Mammary epithelial cell (primary cell): ENCODE measurements at regions of chr11 and their contacts with region 1.

Region 1: DNA sequence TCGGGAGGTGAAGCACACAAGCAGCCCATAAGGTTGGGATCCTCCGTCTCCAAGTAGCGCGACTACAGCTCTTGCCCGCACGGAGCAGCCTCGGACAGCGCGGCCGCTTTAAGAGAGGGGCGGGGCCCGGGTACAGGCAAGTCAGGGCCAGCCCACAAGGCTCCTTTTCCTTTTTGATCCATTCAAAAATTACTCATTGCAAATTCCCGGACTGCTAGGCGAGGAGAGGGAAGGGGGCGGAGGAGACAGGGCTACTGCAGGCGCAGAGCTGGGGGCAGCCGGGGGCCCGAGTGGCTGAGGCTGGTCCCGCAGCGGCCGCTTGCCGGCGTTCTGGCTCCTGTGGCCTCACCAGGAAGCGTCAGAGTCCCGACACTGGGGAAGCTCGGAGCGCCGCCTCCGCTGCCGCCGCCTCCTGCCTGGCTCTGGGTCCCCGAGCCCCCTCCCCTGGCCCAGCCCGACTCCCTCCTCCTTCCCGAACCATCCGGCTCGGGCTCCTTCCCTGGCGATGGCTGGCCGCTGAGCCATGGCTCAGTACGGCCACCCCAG is at the start of gene UBASH3B:
- DNase-seq: peak; percentile 88
- H3K4me3 ChIP-seq: peak within 1 kb of the TSS; percentile 82 to 96 (median 89)
- H3K27ac ChIP-seq: peak within 1 kb of the TSS; percentile 84
- H3K4me1 ChIP-seq: peaks cover 34% of the 10 kb centered on the region
- H3K27me3 ChIP-seq: no peaks in the 10 kb centered on the region
- CTCF ChIP-seq: peak in 1 of 2 donors; percentile 2
- total RNA-seq, gene UBASH3B: 50.7 to 70.3 TPM

Region 2: GRCh38 chr11:122131126-122131525 is 524.5 kb before region 1 on chr11:
- CTCF ChIA-PET with region 1: no interaction called
- dilution Hi-C with region 1: no loop called
- in situ Hi-C with region 1: no loop called
- intact Hi-C with region 1: no loop called
- DNase-seq: no peak
- H3K4me3 ChIP-seq: no peak overlapping the region
- H3K27ac ChIP-seq: no peak overlapping the region
- H3K4me1 ChIP-seq: peaks cover 3% of the 10 kb centered on the region
- H3K27me3 ChIP-seq: no peaks in the 10 kb centered on the region
- CTCF ChIP-seq: no peak

Region 3: DNA sequence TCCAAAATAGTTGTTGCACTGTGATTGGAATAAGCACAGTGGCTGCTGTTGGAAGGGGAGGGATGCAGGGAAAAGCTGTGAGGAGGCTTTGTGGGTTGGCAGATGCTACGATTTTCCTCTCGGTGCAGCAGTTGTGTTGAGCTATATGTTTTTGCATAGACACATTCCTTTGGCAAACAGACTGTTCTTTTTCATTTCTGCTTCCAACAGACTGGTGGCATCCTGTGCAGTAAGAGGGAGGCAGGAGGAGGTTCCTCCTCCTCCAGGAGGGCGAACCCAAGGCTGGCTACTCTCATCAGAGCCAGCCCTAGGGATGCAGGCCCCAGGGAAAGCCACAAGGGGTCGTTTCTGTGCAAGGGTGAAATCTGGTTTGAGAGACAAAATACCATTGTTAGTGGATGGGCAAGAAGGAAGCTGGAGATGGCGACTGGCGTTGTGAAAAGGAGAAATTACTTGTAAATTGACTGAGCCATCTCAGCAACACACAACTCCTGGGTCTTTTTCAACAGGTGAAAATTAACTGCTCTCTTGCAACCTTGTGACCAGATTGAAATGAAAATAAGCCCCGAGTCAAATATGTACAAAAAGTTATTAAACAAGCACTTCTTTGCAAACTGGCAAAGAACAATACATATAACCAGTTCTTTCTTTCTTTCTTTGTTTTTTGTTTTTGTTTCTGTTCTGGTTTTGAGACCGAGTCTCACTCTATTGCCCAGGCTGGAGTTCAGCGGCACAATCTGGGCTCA is 26.6 kb before region 1 on chr11:
- CTCF ChIA-PET with region 1: interaction called, 4 read pairs
- dilution Hi-C with region 1: no loop called
- in situ Hi-C with region 1: no loop called
- intact Hi-C with region 1: loop called (anchors 1 kb)
- DNase-seq: peak; percentile 65
- H3K4me3 ChIP-seq: no peak overlapping the region
- H3K27ac ChIP-seq: no peak overlapping the region
- H3K4me1 ChIP-seq: peaks cover 24% of the 10 kb centered on the region
- H3K27me3 ChIP-seq: no peaks in the 10 kb centered on the region
- CTCF ChIP-seq: peak; percentile 84 to 95

Region 4: GRCh38 chr11:122676638-122677037 is 21.0 kb after region 1 on chr11:
- CTCF ChIA-PET with region 1: no interaction called
- dilution Hi-C with region 1: no loop called
- in situ Hi-C with region 1: no loop called
- intact Hi-C with region 1: loop called (anchors 2 kb)
- DNase-seq: peak; percentile 78
- H3K4me3 ChIP-seq: no peak overlapping the region
- H3K27ac ChIP-seq: peak overlapping the region; percentile 58
- H3K4me1 ChIP-seq: peaks cover 17% of the 10 kb centered on the region
- H3K27me3 ChIP-seq: no peaks in the 10 kb centered on the region
- CTCF ChIP-seq: no peak

Region 5: GRCh38 chr11:122711831-122712381 is 56.3 kb after region 1 on chr11:
- CTCF ChIA-PET with region 1: no interaction called
- dilution Hi-C with region 1: no loop called
- in situ Hi-C with region 1: no loop called
- intact Hi-C with region 1: loop called (anchors 1 kb)
- DNase-seq: peak; percentile 53
- H3K4me3 ChIP-seq: no peak overlapping the region
- H3K27ac ChIP-seq: no peak overlapping the region
- H3K4me1 ChIP-seq: peaks cover 50% of the 10 kb centered on the region
- H3K27me3 ChIP-seq: no peaks in the 10 kb centered on the region
- CTCF ChIP-seq: no peak

Region 6: DNA sequence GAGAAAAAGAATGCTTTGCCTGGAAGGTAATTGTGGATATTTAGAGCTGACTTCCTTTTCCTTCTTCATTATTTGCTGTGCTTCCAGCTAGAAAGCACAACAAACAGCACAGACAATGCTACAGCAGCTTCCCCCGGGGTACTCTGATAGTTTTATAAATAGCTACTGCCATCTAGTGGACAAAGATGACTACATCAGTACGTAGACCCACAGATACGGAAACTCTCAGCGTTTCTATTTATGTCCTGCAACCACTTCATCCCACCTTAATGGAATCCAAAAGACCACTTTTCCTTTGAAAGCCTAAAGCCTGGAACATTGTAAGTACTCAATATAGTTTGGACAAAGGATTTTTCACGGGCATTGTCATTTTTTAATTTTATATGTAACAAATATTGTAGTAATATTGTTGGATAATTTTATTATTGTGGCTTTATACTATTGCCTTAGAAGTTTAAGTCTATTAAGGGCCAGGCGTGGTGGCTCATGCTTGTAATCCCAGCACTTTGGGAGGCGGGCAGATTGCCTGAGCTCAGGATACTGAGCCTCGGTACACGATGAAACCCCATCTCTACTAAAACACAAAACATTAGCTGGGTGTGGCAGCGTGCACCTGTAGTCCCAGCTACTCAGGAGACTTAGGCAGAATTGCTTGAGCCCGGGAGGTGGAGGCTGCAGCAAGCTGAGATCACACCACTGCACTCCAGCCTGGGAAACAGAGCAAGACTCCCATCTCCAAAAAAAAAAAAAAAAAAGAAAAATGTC is 398.9 kb after region 1 on chr11:
- CTCF ChIA-PET with region 1: interaction called, 12 read pairs
- dilution Hi-C with region 1: no loop called
- in situ Hi-C with region 1: no loop called
- intact Hi-C with region 1: no loop called
- DNase-seq: peak; percentile 44
- H3K4me3 ChIP-seq: no peak overlapping the region
- H3K27ac ChIP-seq: no peak overlapping the region
- H3K4me1 ChIP-seq: peaks cover 14% of the 10 kb centered on the region
- H3K27me3 ChIP-seq: no peaks in the 10 kb centered on the region
- CTCF ChIP-seq: peak; percentile 53 to 63